Calu3 (cell line): ENCODE measurements at regions of chr3 and their contacts with region 1.

Region 1: GRCh38 chr3:132352541-132353143 is 35.4 kb downstream of the ACP3 start:
- DNase-seq: peak; percentile 84
- H3K4me3 Mint-ChIP-seq: no peak overlapping the region
- H3K27ac Mint-ChIP-seq: no peak overlapping the region
- H3K4me1 Mint-ChIP-seq: no peaks in the 10 kb centered on the region
- H3K27me3 Mint-ChIP-seq: no peaks in the 10 kb centered on the region
- CTCF ChIP-seq: peak; percentile 91

Region 2: DNA sequence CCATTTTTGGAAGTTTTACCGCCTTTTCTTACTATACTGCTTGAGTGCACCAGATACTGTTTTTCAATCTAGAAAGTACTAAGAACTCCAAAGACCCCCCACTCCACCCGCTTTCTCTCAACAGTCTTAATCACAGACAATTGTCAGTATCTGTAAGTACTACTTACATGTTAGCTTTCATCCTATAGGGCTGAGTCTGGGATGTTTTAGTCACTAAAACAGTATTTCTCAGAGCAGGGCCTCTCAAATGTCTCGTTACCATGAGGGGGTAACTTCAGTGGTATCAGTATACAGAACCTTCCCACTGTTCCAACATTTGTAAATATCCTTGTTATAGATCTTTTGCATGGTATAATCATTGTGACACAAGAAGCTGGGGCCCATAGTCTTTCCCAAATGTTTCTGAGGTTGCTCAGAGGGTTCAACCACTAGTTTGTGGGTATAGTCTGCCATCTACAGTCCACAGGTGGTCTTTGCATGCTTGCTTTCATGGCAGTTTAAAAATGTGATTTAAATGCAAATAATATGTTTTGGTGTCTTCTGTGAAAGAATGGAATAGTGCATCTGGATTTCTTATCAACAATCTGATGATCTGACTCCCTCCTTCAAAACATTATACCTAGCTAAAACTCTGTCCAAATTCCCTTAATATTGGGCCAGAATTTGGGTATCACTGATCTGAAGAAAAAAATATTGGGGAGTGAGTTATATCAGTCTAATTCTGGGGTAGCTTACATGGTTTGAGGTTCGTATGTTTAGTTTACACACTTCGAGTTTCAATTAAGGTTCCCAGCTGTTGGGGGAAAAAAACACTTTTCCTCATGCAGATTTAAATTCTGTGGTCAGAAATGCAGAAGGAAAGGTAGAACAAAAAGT is 46.6 kb after region 1 on chr3:
- CTCF ChIA-PET with region 1: interaction called, 25 read pairs
- intact Hi-C with region 1: loop called (anchors 1 kb)
- DNase-seq: peak; percentile 63
- H3K4me3 Mint-ChIP-seq: no peak overlapping the region
- H3K27ac Mint-ChIP-seq: no peak overlapping the region
- H3K4me1 Mint-ChIP-seq: no peaks in the 10 kb centered on the region
- H3K27me3 Mint-ChIP-seq: no peaks in the 10 kb centered on the region
- CTCF ChIP-seq: peak; percentile 87